ENCODE measurements at regions of chr1 and their contacts with region 1.

Region 1: DNA sequence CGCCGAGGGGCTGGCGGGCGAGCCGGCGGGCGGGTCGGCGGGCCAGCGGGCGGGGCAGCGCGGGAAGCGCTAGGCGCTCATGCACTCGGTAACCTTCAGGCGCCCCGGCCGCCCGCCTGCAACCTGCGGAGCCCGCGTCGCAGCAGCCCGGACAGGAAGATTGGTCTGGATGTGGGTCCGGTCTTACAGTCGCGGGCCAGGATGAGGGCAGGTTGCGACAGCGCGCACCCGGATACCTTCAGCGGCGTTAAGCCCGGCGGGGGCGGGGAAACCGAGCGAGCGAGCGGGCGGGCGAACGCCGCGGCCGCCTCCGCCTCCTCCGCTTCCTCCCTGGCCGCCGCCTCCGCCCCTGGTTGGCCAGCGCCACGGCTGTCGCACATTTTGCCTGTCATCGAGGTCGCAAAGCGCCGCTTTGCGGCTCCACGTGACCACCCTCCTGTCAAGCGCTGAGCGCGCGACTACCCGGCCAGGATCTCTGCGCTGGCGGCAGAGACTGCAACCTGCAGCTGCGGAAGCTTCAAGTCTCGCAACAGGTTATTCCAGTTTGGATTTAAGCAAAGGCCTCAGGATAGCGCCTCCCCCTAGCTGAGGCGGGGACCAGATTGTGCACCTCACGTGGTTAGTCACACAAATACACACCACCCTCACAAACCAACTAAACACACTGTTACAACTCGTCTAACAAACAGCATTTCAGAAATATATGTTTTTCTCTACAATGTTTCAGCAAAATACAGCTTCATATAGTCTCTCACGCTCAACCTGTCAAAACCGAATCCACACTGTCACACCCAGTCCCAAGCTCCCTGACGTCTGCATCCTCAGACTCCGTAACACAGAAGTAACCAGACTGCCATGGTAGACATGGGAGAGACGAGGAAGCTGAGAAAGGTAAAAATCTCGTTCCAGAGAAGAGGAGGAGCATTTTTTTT is at the start of gene FAF1:
- DNase-seq: peak; percentile 100
- H3K4me3 Mint-ChIP-seq: peak within 1 kb of the TSS; percentile 87
- H3K27ac Mint-ChIP-seq: peak within 1 kb of the TSS; percentile 95
- H3K4me1 Mint-ChIP-seq: peaks cover 18% of the 10 kb centered on the region
- H3K27me3 Mint-ChIP-seq: peaks cover 10% of the 10 kb centered on the region
- total RNA-seq, gene FAF1: 63.7 and 67.2 TPM in 2 replicates

Region 2: DNA sequence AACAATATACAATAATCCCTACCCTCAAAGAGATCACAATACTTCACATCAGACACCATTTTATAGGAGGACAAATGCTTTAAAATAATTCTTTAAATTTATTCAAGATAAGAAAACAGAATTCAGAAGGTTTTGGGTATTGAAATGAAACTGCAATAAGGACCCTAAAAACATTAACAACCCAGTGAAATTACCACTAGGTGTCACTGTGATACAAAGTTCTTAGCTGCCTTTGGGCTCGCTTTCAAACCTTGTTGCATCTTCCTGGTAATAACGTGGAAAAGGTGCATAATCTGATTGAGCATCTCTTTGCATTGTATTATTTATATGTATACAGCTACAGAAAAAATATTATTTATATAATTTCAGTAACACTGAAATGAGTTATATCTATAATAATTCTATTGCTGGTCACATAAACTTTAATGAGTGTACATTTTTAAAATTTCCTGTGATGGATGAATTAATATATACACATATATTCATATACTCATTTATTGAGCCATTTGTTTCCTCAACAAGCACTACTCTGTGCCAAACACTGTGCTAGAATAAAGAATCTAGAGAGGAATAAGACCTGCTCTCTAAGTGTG is 185.3 kb before region 1 on chr1:
- intact Hi-C with region 1: loop called (anchors 10 kb)
- DNase-seq: peak; percentile 65
- H3K4me3 Mint-ChIP-seq: no peak overlapping the region
- H3K27ac Mint-ChIP-seq: no peak overlapping the region
- H3K4me1 Mint-ChIP-seq: peaks cover 2% of the 10 kb centered on the region
- H3K27me3 Mint-ChIP-seq: no peaks in the 10 kb centered on the region

Region 3: DNA sequence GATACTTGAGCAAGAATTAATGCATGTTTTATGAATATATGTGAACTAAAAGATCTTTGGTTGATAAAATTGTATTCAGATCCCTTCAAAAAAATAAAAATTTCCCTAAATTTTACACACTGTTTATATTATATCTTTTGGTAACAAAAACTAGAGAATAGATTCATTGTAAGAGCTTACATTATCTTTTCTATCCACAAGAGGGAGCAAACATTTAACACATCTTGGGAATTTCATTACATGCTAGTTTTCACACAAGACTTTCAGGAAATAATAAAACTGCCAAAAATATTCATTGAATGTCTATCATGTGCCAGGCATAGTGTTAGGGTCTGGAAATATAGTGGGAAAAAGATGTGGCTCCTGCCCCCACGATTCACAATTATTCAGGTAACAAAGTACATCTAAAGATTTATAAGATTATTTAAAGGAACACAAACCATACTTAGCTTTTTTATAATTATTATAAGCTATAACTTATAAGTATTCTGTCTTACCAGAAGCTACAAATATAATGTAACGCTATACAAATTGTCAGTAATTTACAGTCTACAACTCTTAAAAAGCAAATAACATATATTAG is 30.7 kb before region 1 on chr1:
- intact Hi-C with region 1: loop called (anchors 2 kb)
- DNase-seq: no peak
- H3K4me3 Mint-ChIP-seq: no peak overlapping the region
- H3K27ac Mint-ChIP-seq: no peak overlapping the region
- H3K4me1 Mint-ChIP-seq: peaks cover 17% of the 10 kb centered on the region
- H3K27me3 Mint-ChIP-seq: no peaks in the 10 kb centered on the region

Region 4: GRCh38 chr1:50977575-50978143 is 17.5 kb after region 1 on chr1:
- intact Hi-C with region 1: loop called (anchors 2 kb)
- DNase-seq: peak; percentile 76
- H3K4me3 Mint-ChIP-seq: peak overlapping the region; percentile 84
- H3K27ac Mint-ChIP-seq: peak overlapping the region; percentile 58
- H3K4me1 Mint-ChIP-seq: peaks cover 21% of the 10 kb centered on the region
- H3K27me3 Mint-ChIP-seq: peaks cover 42% of the 10 kb centered on the region

Region 5: DNA sequence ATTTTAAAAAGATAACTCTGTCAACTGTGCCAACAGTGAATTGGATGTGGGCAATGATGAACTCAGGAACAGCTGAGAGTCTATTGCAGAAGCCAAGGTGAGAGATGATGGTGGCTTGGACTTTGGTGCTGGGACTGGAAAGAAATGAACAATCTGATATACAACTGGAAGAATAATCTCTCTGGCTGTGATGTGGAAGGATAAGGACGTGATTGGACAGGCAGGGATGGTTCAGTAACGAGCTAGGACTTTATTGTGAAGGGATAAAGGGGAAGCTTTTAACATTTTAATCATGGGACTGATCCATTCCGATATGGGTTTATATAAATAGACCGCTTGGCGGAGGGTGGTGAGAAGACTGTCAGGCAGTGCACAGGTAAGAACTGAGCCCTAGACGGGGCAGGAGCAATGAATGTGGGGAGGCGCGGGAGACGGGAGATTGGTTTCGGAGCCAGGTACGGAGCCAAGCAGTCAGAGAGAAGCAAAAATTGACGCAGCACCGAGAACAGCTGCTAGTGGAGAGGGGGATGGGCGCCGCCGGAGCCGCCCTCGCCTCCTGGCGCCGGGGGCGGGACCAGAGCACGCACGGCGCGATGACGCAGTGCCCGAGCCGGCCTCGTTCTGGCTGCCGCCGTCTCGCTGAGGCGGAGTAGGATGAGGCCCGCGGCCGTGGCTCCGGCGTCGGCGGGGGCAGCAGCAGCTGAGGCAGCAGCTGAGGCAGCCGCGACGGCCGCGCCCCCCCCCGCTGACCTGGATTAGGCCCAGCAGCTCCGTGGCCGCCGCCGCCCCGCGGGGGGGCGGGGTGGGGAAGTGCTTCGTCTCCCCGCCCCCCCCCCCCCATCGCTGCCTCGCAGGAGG is 275.7 kb after region 1 on chr1 and contains the start of gene RNF11:
- intact Hi-C with region 1: loop called (anchors 5 kb)
- DNase-seq: peak; percentile 98
- H3K4me3 Mint-ChIP-seq: peak within 1 kb of the TSS; percentile 85
- H3K27ac Mint-ChIP-seq: peak within 1 kb of the TSS; percentile 63
- H3K4me1 Mint-ChIP-seq: peaks cover 30% of the 10 kb centered on the region
- H3K27me3 Mint-ChIP-seq: peaks cover 2% of the 10 kb centered on the region
- total RNA-seq, gene RNF11: 24.6 and 33.6 TPM in 2 replicates

Measured in activated CD4-positive, alpha-beta T cell treated with anti-CD3 and anti-CD28 coated beads, Interleukin-2, amount 10 ng/mL, durations not matched to agents 24 days and 14 days (primary cell).